SK-N-SH (cell line): ENCODE measurements at regions of chr16 and their contacts with region 1.

Region 1: DNA sequence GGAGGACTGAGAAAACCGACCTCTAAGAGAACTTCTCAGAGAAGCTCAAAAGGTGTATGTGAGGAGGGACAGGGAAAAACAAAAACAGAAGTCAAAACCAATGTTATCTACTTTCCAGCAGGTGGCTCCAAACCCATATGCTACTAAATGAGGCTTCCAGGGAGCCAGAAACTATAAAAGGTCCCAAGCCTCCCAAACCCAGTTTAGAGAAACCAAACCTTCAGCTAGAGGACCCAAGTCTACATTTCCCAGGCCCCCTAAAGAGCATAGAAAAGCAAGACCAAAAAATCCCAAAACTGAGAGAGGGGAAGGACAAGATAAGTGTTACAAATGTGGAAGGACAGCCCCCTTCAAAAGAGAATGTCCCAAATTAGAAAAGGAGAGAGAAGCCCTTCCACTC is 3.7 kb downstream of the HPR start:
- DNase-seq: peak; percentile 37
- H3K4me3 ChIP-seq: no peak overlapping the region
- H3K27ac ChIP-seq: no peak overlapping the region
- H3K4me1 ChIP-seq: no peaks in the 10 kb centered on the region
- H3K27me3 ChIP-seq: no peaks in the 10 kb centered on the region
- CTCF ChIP-seq: peak; percentile 68
- EP300 ChIP-seq: no peak
- RAD21 ChIP-seq: peak; percentile 77

Region 2: GRCh38 chr16:72091217-72091616 is 24.5 kb after region 1 on chr16:
- CTCF ChIA-PET with region 1: interaction called, 48 read pairs
- POLR2A ChIA-PET with region 1: no interaction called
- DNase-seq: no peak
- H3K4me3 ChIP-seq: no peak overlapping the region
- H3K27ac ChIP-seq: no peak overlapping the region
- H3K4me1 ChIP-seq: peaks cover 9 to 19% of the 10 kb centered on the region in 2 experiments; a peak in 3 of 4 replicates
- H3K27me3 ChIP-seq: no peaks in the 10 kb centered on the region
- CTCF ChIP-seq: no peak
- EP300 ChIP-seq: no peak
- RAD21 ChIP-seq: no peak

Region 3: GRCh38 chr16:72099377-72099818 is 32.7 kb after region 1 on chr16:
- CTCF ChIA-PET with region 1: interaction called, 48 read pairs
- POLR2A ChIA-PET with region 1: no interaction called
- DNase-seq: peak; percentile 78
- H3K4me3 ChIP-seq: no peak overlapping the region
- H3K27ac ChIP-seq: no peak overlapping the region
- H3K4me1 ChIP-seq: peaks cover 8 to 9% of the 10 kb centered on the region in 2 experiments; a peak in 3 of 4 replicates
- H3K27me3 ChIP-seq: no peaks in the 10 kb centered on the region
- CTCF ChIP-seq: peak; percentile 66
- EP300 ChIP-seq: no peak
- RAD21 ChIP-seq: peak; percentile 72